B cell (primary cell): ENCODE measurements at regions of chr4 and their contacts with region 1.

Region 1: DNA sequence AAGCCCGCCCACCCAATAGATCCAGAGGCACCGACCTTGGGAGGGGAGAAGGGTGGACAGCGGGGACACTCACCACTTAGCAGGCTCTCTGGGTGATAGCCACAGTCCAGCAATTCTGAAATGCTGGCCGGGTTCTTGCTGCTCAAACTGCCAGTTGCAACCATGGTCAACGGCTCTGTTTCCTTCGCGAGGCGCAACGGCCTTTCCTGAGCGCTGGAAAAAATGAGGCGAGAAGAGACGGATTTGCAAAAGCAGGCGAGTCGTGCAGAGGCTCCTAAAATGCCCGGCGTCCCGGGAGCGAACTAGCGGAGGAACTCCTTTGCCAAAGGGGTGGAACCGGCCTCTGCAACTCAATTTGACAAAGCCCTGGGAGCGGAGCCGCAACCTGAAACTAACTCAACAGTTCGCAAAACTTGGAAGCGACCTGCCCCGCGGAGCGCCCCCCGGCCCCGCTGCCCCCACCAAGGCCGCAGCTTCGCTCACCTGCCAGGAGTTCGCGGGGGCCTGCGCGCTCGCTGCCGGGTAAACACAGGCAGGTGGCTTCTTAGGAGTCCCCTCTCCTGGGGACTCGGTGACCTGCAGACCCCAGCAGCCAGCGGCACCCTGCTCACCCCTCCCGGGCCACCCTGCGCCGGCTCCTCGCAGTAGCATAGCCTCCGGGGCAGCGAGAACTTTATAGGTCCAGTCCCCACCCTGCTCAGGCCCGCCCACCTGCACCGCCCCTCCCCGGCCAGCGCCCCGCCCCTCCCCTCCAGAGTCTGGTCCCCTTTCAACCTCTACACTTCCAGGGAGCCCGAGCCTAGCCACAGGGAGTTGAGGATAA is at the start of gene DDIT4L:
- DNase-seq: peak; percentile 19
- ATAC-seq: peak; percentile 87
- H3K4me3 ChIP-seq: peak within 1 kb of the TSS; percentile 34 to 62 (median 53)
- H3K4me3 Mint-ChIP-seq: peak within 1 kb of the TSS; percentile 84
- H3K27ac ChIP-seq: no peak within 1 kb of the TSS
- H3K27ac Mint-ChIP-seq: no peak within 1 kb of the TSS
- H3K4me1 ChIP-seq: peaks cover 15 to 17% of the 10 kb centered on the region in 2 donors
- H3K4me1 Mint-ChIP-seq: peaks cover 14% of the 10 kb centered on the region
- H3K27me3 ChIP-seq: peaks cover 0 to 34% (median 24%) of the 10 kb centered on the region in 4 experiments
- H3K27me3 Mint-ChIP-seq: peaks cover 30% of the 10 kb centered on the region
- CTCF ChIP-seq: no peak
- total RNA-seq, gene DDIT4L: 0.12 TPM in 1 of 2 replicates, not detected in the other

Region 2: DNA sequence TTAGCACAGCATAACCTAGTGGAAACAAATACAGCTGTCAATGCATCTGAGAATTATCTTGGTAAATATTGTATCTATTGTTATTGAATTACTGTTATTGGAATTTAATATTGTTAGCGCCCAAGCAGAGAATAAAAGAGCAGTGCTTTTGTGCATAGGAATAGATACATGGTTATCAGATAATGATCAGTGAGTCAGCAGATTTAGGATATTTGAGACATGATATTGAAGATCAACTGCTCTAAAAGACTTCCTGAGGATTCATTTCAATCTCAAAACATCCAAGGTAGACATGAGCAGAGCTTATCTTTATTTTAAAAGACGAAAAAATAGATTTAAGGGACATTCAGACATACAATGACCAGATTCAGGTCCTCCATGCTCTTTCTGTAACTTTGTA is 229.4 kb before region 1 on chr4:
- CTCF ChIA-PET with region 1: no interaction called
- POLR2A ChIA-PET with region 1: no interaction called
- intact Hi-C with region 1: no loop called
- DNase-seq: no peak
- ATAC-seq: no peak
- H3K4me3 ChIP-seq: no peak overlapping the region
- H3K4me3 Mint-ChIP-seq: no peak overlapping the region
- H3K27ac ChIP-seq: no peak overlapping the region
- H3K27ac Mint-ChIP-seq: no peak overlapping the region
- H3K4me1 ChIP-seq: no peaks in the 10 kb centered on the region
- H3K4me1 Mint-ChIP-seq: no peaks in the 10 kb centered on the region
- H3K27me3 ChIP-seq: no peaks in the 10 kb centered on the region
- H3K27me3 Mint-ChIP-seq: peaks cover 5% of the 10 kb centered on the region
- CTCF ChIP-seq: no peak

Region 3: DNA sequence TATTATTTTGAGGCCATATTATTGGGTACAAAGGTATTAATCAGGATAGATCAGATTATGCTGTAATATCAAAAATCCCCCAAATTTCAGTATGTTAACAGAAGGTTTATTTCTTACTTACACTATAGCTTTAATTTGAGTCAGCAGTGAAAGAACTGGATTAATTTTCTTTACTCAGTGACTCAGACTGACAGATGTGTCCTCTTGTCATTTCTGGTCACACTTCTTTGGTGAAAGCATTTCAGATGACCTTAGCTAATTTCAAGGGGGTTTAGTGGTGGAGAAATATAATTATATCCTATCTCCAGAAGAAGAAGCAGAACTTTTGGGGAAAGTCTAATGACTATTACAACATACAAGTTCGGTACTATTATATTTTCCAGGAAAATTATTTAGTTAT is 12.2 kb before region 1 on chr4:
- CTCF ChIA-PET with region 1: no interaction called
- POLR2A ChIA-PET with region 1: no interaction called
- intact Hi-C with region 1: loop called (anchors 2 kb)
- DNase-seq: no peak
- ATAC-seq: no peak
- H3K4me3 ChIP-seq: no peak overlapping the region
- H3K4me3 Mint-ChIP-seq: no peak overlapping the region
- H3K27ac ChIP-seq: no peak overlapping the region
- H3K27ac Mint-ChIP-seq: no peak overlapping the region
- H3K4me1 ChIP-seq: no peaks in the 10 kb centered on the region
- H3K4me1 Mint-ChIP-seq: no peaks in the 10 kb centered on the region
- H3K27me3 ChIP-seq: no peaks in the 10 kb centered on the region
- H3K27me3 Mint-ChIP-seq: peaks cover 3% of the 10 kb centered on the region
- CTCF ChIP-seq: no peak